ENCODE measurements at regions of chr1 and their contacts with region 1.

Region 1: GRCh38 chr1:27556781-27557595 is 47.0 kb downstream of the AHDC1 start:
- DNase-seq: no peak
- ATAC-seq: peak; percentile 92
- H3K4me3 ChIP-seq: no peak overlapping the region
- H3K27ac ChIP-seq: no peak overlapping the region
- H3K4me1 ChIP-seq: peaks cover 16% of the 10 kb centered on the region
- H3K27me3 ChIP-seq: no peaks in the 10 kb centered on the region
- CTCF ChIP-seq: peak; percentile 85 to 96 (median 86)
- EP300 ChIP-seq: no peak
- POLR2A ChIP-seq: no peak
- RAD21 ChIP-seq: peak; percentile 85

Region 2: GRCh38 chr1:27402349-27402754 is 154.6 kb before region 1 on chr1:
- CTCF ChIA-PET with region 1: interaction called, 12 read pairs
- POLR2A ChIA-PET with region 1: no interaction called
- RAD21 ChIA-PET with region 1: interaction called, 5 read pairs
- SMC1A ChIA-PET with region 1: interaction called, 4 read pairs
- in situ Hi-C with region 1: no loop called
- intact Hi-C with region 1: no loop called
- DNase-seq: no peak
- ATAC-seq: peak; percentile 31
- H3K4me3 ChIP-seq: no peak overlapping the region
- H3K27ac ChIP-seq: no peak overlapping the region
- H3K4me1 ChIP-seq: peaks cover 16% of the 10 kb centered on the region
- H3K27me3 ChIP-seq: no peaks in the 10 kb centered on the region
- CTCF ChIP-seq: peak; percentile 37 to 48 (median 43); a peak in 4 of 6 replicates
- EP300 ChIP-seq: no peak
- POLR2A ChIP-seq: 0 out of 2 replicates have a peak, but pooled peaks have one; percentile 37
- RAD21 ChIP-seq: peak; percentile 55

Region 3: GRCh38 chr1:27430903-27431600 is 125.9 kb before region 1 on chr1:
- CTCF ChIA-PET with region 1: interaction called, 12 read pairs
- POLR2A ChIA-PET with region 1: no interaction called
- RAD21 ChIA-PET with region 1: interaction called, 6 read pairs
- SMC1A ChIA-PET with region 1: interaction called, 4 read pairs
- in situ Hi-C with region 1: no loop called
- intact Hi-C with region 1: no loop called
- DNase-seq: no peak
- ATAC-seq: peak; percentile 63
- H3K4me3 ChIP-seq: peak overlapping the region; percentile 12; the same call in 1 of the 2 replicates
- H3K27ac ChIP-seq: peak overlapping the region; percentile 59
- H3K4me1 ChIP-seq: peaks cover 76% of the 10 kb centered on the region
- H3K27me3 ChIP-seq: no peaks in the 10 kb centered on the region
- CTCF ChIP-seq: 0 out of 6 replicates have a peak, but pooled peaks of 1 of the 3 experiments have one; percentile 1
- EP300 ChIP-seq: no peak
- POLR2A ChIP-seq: no peak
- RAD21 ChIP-seq: 0 out of 2 replicates have a peak, but pooled peaks have one; percentile 7

Region 4: GRCh38 chr1:27568300-27569087 is 11.5 kb after region 1 on chr1:
- CTCF ChIA-PET with region 1: interaction called, 71 read pairs
- POLR2A ChIA-PET with region 1: interaction called, 5 read pairs
- RAD21 ChIA-PET with region 1: interaction called, 5 read pairs
- SMC1A ChIA-PET with region 1: interaction called, 7 read pairs
- in situ Hi-C with region 1: no loop called
- intact Hi-C with region 1: no loop called
- DNase-seq: peak; percentile 60
- ATAC-seq: peak; percentile 95
- H3K4me3 ChIP-seq: peak overlapping the region; percentile 52; the same call in 1 of the 2 replicates
- H3K27ac ChIP-seq: no peak overlapping the region
- H3K4me1 ChIP-seq: peaks cover 7% of the 10 kb centered on the region
- H3K27me3 ChIP-seq: no peaks in the 10 kb centered on the region
- CTCF ChIP-seq: peak; percentile 64 to 69 (median 68)
- EP300 ChIP-seq: no peak
- POLR2A ChIP-seq: no peak
- RAD21 ChIP-seq: peak; percentile 46

Region 5: GRCh38 chr1:27581823-27582243 is 24.8 kb after region 1 on chr1:
- CTCF ChIA-PET with region 1: interaction called, 12 read pairs
- POLR2A ChIA-PET with region 1: no interaction called
- RAD21 ChIA-PET with region 1: no interaction called
- SMC1A ChIA-PET with region 1: interaction called, 3 read pairs
- in situ Hi-C with region 1: no loop called
- intact Hi-C with region 1: no loop called
- DNase-seq: no peak
- ATAC-seq: no peak
- H3K4me3 ChIP-seq: no peak overlapping the region
- H3K27ac ChIP-seq: no peak overlapping the region
- H3K4me1 ChIP-seq: no peaks in the 10 kb centered on the region
- H3K27me3 ChIP-seq: no peaks in the 10 kb centered on the region
- CTCF ChIP-seq: no peak
- EP300 ChIP-seq: no peak
- POLR2A ChIP-seq: no peak
- RAD21 ChIP-seq: no peak

Region 6: DNA sequence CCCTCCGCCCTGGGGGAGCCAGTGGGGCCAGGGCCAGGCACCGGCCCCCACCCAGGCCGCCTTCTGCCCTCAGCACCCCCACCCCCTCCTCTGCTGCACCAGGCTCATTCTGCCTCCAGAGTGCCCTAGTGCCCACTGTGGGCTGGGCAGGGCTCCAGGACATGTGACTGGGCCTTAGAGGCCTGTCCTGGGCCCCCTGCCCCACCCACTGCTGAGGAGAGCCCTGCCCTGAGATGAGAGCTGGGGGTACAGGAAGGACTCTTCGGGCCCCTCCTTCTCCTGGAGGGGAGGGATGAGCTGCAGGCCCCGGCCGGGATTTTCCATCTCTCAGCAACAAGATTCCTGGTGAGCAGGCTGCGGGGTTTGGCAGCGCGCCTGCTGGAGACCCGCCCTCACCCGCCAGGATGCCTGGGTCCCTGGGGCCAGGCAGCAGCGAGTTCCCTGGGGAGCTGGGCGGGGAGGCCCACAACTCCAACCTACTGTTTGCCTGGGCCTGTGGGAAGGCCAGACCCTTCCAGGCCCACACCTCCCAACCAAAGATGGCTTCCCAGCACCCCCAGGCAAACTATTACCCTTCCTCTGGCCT is 32.9 kb after region 1 on chr1:
- CTCF ChIA-PET with region 1: interaction called, 12 read pairs
- POLR2A ChIA-PET with region 1: no interaction called
- RAD21 ChIA-PET with region 1: no interaction called
- SMC1A ChIA-PET with region 1: interaction called, 9 read pairs
- in situ Hi-C with region 1: no loop called
- intact Hi-C with region 1: no loop called
- DNase-seq: no peak
- ATAC-seq: no peak
- H3K4me3 ChIP-seq: no peak overlapping the region
- H3K27ac ChIP-seq: no peak overlapping the region
- H3K4me1 ChIP-seq: no peaks in the 10 kb centered on the region; the same call in 1 of the 2 replicates
- H3K27me3 ChIP-seq: no peaks in the 10 kb centered on the region
- CTCF ChIP-seq: no peak
- EP300 ChIP-seq: no peak
- POLR2A ChIP-seq: no peak
- RAD21 ChIP-seq: no peak

Region 7: GRCh38 chr1:27795601-27796000 is 238.6 kb after region 1 on chr1:
- CTCF ChIA-PET with region 1: no interaction called
- POLR2A ChIA-PET with region 1: no interaction called
- RAD21 ChIA-PET with region 1: no interaction called
- SMC1A ChIA-PET with region 1: no interaction called
- in situ Hi-C with region 1: no loop called
- intact Hi-C with region 1: no loop called
- DNase-seq: no peak
- ATAC-seq: no peak
- H3K4me3 ChIP-seq: no peak overlapping the region
- H3K27ac ChIP-seq: no peak overlapping the region
- H3K4me1 ChIP-seq: no peaks in the 10 kb centered on the region
- H3K27me3 ChIP-seq: no peaks in the 10 kb centered on the region
- CTCF ChIP-seq: no peak
- EP300 ChIP-seq: no peak
- POLR2A ChIP-seq: no peak
- RAD21 ChIP-seq: no peak

Region 8: DNA sequence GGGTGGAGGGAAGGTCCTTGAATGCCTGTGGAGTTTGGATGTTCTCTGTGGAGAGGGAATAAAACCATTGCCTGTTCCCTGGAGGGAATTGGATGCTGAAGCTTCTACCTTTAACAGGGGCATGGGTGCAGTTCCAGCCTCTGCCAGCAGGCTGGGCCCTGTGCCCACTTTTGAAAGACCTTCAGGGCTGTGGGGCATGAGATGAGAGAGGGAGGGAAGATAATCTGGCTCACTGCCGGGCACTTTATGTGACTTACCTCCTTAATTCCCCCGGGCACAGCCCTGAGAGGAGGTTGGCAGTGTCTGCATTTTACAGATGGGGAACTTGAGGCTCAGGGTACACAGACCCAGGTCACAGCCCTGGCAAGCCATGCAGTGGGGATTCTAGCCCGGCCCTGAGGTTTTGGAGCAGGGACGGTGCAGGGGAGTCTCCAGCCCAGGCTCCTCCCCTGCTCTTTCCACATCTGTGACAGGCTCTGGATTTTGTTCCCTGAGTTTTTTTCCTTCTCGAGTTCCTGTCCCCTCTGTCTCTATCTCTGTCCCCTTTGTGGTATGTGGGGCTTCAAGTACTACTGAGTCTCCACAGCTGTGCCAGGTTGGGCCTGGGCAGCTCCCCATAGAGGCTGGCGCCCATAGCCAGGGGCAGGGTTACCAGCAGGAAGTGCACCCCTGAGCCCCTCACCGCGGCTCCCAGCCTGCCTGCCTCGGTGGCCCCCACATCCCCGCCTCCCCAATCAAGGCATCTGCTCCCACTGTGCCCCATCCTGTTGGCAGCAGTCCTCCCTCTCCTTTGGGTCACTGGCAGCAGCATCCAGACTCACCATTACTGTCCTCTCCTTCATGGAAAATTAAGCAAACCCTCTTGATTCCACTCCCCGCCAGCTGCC is 301.3 kb after region 1 on chr1:
- CTCF ChIA-PET with region 1: no interaction called
- POLR2A ChIA-PET with region 1: no interaction called
- RAD21 ChIA-PET with region 1: no interaction called
- SMC1A ChIA-PET with region 1: no interaction called
- in situ Hi-C with region 1: no loop called
- intact Hi-C with region 1: no loop called
- DNase-seq: no peak
- ATAC-seq: peak; percentile 91
- H3K4me3 ChIP-seq: no peak overlapping the region
- H3K27ac ChIP-seq: no peak overlapping the region
- H3K4me1 ChIP-seq: peaks cover 17% of the 10 kb centered on the region
- H3K27me3 ChIP-seq: no peaks in the 10 kb centered on the region
- CTCF ChIP-seq: peak; percentile 99 to 100 (median 99); a peak in 5 of 6 replicates
- EP300 ChIP-seq: no peak
- POLR2A ChIP-seq: no peak
- RAD21 ChIP-seq: peak; percentile 100